Mammary epithelial cell (primary cell): ENCODE measurements at regions of chr19 and their contacts with region 1.

Region 1: GRCh38 chr19:18675779-18676178 is 7.7 kb upstream of the CRTC1 start:
- DNase-seq: no peak
- H3K4me3 ChIP-seq: no peak overlapping the region
- H3K27ac ChIP-seq: no peak overlapping the region
- H3K4me1 ChIP-seq: peaks cover 19% of the 10 kb centered on the region
- H3K27me3 ChIP-seq: no peaks in the 10 kb centered on the region
- CTCF ChIP-seq: peak; percentile 23 to 54

Region 2: DNA sequence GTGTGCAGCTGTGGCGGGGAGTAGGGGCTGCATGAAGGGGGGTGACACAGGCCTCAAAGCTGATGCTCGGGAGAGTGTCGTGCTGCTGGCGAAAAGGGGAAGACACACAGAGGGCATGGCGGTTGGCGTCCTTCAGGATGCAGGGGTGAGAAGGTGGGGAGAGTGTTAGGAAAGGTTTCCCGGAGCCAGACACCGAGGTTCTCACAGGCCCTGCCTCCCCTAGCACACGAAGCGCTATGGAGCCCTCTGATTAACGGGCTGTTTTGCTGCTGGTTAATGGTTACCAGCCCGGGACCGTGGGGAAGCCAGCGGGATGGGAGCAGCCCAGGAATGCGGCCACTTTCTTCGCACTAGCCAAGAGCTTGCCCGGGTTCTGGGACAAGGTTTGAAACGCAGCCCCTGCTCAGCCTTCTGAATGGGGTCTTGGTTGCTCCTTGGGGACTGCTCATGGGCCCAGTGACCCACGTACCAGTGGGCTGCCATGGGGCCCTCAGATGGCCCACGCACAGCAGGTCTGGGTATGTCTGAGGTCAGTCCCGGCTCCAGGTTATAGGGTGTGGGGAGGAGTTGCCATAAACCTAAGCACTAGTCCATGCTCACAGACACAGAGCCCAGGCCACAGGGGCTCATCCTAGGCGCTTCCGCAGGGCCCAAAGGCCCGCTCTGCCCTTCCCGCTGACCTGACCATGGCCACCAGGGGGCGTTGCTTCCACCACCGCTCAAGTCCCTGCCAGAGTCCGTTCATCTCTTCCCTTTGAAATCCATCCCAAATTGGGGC is 206.5 kb before region 1 on chr19:
- CTCF ChIA-PET with region 1: no interaction called
- dilution Hi-C with region 1: no loop called
- in situ Hi-C with region 1: loop called in 1 of 2 experiments (anchors 25 kb)
- intact Hi-C with region 1: loop called (anchors 10 kb)
- DNase-seq: no peak
- H3K4me3 ChIP-seq: no peak overlapping the region
- H3K27ac ChIP-seq: no peak overlapping the region
- H3K4me1 ChIP-seq: peaks cover 8% of the 10 kb centered on the region
- H3K27me3 ChIP-seq: no peaks in the 10 kb centered on the region
- CTCF ChIP-seq: peak; percentile 68 to 83

Region 3: DNA sequence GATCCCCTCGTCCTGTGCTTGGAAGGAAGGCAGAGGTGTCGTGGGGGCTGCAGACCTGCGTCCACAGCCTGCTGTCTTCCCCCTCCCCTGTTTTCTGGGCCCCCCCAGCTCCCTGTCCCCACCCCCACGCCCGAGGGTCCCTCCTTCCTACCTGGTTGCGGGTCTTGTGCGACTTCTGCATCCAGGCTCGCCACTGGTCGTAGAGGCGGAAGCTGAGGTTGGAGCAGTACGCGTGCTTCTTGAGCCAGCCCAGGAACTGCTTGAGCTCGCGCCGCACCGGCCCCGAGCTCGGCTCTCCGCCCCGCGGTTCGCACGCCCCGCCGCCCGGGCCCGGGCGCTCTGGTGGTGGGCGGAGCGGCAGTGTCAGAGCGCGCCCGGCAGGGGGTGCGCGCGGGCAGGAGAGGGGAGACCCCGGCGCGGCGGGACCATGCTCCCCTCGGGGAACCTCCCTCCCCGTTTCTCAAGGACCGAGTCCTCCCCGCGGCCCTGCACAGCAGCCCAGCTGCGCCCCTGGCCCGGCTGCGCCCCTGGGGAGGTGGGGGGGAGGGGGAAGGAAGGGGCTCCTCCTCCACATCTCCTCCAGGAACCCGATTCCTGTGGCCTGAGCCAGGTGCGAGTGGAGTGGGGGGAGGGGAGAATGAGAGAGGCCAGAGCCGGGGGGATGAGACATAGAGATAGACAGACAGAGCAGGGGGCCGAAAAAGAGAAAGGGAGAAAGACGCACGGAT is 81.5 kb before region 1 on chr19:
- CTCF ChIA-PET with region 1: interaction called, 3 read pairs
- dilution Hi-C with region 1: loop called (anchors 5 kb)
- in situ Hi-C with region 1: no loop called
- intact Hi-C with region 1: loop called (anchors 1 kb)
- DNase-seq: peak; percentile 62
- H3K4me3 ChIP-seq: peak overlapping the region; percentile 21 to 49 (median 34)
- H3K27ac ChIP-seq: no peak overlapping the region
- H3K4me1 ChIP-seq: peaks cover 21% of the 10 kb centered on the region
- H3K27me3 ChIP-seq: no peaks in the 10 kb centered on the region
- CTCF ChIP-seq: peak; percentile 63 to 64

Region 4: DNA sequence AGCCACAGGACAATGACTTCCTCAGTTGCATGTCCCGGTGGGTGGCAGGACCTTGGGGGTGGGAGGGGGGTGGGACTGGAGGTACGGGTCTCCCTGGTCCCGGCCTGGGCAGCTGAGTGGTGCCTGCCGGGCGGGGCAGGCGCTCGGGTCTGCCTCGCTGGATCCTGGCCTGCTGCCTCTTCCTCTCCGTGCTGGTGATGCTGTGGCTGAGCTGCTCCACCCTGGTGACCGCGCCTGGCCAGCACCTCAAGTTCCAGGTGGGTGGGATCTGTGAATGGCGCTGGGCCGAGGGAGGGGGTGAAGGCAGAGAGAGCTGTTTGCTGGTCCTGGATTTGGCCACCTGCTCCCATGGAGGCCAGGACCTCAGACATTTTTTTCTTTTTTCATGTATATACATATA is 57.5 kb before region 1 on chr19:
- CTCF ChIA-PET with region 1: no interaction called
- dilution Hi-C with region 1: no loop called
- in situ Hi-C with region 1: no loop called
- intact Hi-C with region 1: no loop called
- DNase-seq: no peak
- H3K4me3 ChIP-seq: no peak overlapping the region
- H3K27ac ChIP-seq: no peak overlapping the region
- H3K4me1 ChIP-seq: no peaks in the 10 kb centered on the region
- H3K27me3 ChIP-seq: peaks cover 6% of the 10 kb centered on the region
- CTCF ChIP-seq: no peak

Region 5: GRCh38 chr19:18629166-18630088 is 46.4 kb before region 1 on chr19:
- CTCF ChIA-PET with region 1: no interaction called
- dilution Hi-C with region 1: no loop called
- in situ Hi-C with region 1: no loop called
- intact Hi-C with region 1: no loop called
- DNase-seq: no peak
- H3K4me3 ChIP-seq: no peak overlapping the region
- H3K27ac ChIP-seq: no peak overlapping the region
- H3K4me1 ChIP-seq: no peaks in the 10 kb centered on the region
- H3K27me3 ChIP-seq: no peaks in the 10 kb centered on the region
- CTCF ChIP-seq: no peak

Region 6: GRCh38 chr19:18745012-18745735 is 69.4 kb after region 1 on chr19:
- CTCF ChIA-PET with region 1: no interaction called
- dilution Hi-C with region 1: loop called (anchors 5 kb)
- in situ Hi-C with region 1: no loop called
- intact Hi-C with region 1: no loop called
- DNase-seq: no peak
- H3K4me3 ChIP-seq: no peak overlapping the region
- H3K27ac ChIP-seq: no peak overlapping the region
- H3K4me1 ChIP-seq: no peaks in the 10 kb centered on the region
- H3K27me3 ChIP-seq: no peaks in the 10 kb centered on the region
- CTCF ChIP-seq: no peak